Activated CD8-positive, alpha-beta T cell treated with anti-CD3 and anti-CD28 coated beads for 36 hours (primary cell): ENCODE measurements at regions of chrX and their contacts with region 1.

Region 1: DNA sequence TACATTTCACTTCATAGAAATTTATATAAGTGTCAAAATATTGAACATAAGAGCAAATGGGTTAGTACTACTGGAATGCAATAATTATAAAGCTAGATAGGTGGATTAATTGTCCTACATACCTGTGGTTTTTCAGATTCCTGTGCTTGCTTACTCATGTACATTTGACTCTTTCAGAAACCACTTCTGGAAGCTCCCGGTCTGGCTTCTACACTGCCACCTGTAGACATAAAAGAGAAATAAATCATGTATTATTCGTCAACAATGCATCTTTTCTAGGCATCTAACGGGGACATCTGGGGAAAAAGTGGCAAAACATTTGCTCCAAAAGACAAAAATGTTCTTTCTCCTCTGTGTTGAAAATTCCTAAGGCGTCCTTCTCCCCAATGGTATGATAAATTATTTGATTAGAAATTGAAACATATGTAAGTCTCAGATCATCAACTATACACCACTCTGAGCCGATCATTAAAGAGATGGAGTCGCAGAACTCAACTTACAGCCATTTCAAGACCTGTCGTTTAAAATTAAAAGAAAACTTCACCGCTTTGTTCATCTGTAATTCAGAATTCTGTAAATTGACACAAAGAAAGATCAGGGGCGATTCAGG is 648.7 kb upstream of the DIPK2B start:
- DNase-seq: peak; percentile 40
- ATAC-seq: no peak
- H3K4me3 Mint-ChIP-seq: peak overlapping the region; percentile 92
- H3K27ac Mint-ChIP-seq: peak overlapping the region; percentile 91
- H3K4me1 Mint-ChIP-seq: peaks cover 40% of the 10 kb centered on the region
- H3K27me3 Mint-ChIP-seq: no peaks in the 10 kb centered on the region
- CTCF ChIP-seq: peak; percentile 27

Region 2: DNA sequence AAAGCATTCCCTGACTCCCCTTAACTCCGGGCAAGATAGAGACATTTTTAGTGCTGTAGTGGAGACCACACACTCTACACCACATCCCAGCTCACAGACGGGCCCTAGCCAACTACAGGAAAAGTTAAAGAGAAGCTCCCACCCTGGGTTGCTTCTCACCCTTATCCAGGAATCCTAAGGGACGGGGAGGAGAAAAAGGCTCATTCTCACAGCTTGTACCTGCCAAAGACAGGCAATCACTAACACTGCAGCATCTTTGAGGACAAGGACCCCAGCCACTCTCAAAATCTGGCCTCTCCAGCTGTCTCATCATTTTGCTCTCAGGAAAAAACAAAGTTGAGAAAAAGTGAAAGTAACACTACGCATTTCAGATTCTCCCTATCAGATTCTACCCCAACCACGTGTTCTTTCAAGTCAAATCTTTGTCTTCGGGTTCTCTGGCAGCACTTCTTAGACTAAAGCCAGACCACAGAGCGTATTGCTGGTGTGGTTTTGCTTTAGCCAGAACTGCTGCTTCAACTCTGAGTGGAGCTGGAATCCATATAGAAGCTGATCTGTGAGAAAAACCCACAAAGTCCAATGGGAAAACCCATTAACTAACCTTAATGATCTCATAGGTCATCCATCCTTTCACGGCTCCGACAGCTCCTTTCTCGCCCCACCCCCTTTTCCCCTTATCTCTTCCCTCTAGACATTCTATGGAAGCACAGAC is 42.8 kb before region 1 on chrX:
- CTCF ChIA-PET with region 1: interaction called, 15 read pairs
- POLR2A ChIA-PET with region 1: interaction called, 27 read pairs
- intact Hi-C with region 1: loop called (anchors 2 kb)
- DNase-seq: peak; percentile 67
- ATAC-seq: peak; percentile 66
- H3K4me3 Mint-ChIP-seq: peak overlapping the region; percentile 60
- H3K27ac Mint-ChIP-seq: peak overlapping the region; percentile 92
- H3K4me1 Mint-ChIP-seq: peaks cover 86% of the 10 kb centered on the region
- H3K27me3 Mint-ChIP-seq: no peaks in the 10 kb centered on the region
- CTCF ChIP-seq: no peak

Region 3: DNA sequence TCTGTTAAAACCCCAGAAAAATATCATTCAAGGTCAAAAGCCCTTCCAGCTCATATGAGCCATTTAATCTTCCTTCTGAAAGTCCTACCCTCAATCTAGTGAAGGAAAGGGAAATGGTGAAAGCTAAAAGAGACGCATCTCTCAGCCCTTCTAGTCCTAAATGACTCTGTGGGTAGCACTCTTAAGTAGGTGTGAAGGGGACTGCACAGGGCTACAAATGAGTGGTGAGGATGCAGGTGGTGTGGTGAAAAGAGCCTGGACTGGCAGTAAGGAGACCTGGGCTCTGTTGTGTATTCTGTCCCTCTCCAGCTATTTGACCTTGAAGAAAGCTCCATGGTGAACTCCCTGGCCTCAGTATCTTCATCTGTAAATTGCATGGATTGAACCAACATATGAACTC is 23.1 kb after region 1 on chrX:
- CTCF ChIA-PET with region 1: no interaction called
- POLR2A ChIA-PET with region 1: no interaction called
- intact Hi-C with region 1: no loop called
- DNase-seq: peak; percentile 17
- ATAC-seq: no peak
- H3K4me3 Mint-ChIP-seq: no peak overlapping the region
- H3K27ac Mint-ChIP-seq: no peak overlapping the region
- H3K4me1 Mint-ChIP-seq: peaks cover 16% of the 10 kb centered on the region
- H3K27me3 Mint-ChIP-seq: peaks cover 1% of the 10 kb centered on the region
- CTCF ChIP-seq: no peak